ENCODE measurements at regions of chr19 and their contacts with region 1.

Region 1: GRCh38 chr19:44845612-44846454 is at the start of gene NECTIN2:
- DNase-seq: peak; percentile 100
- ATAC-seq: peak; percentile 89 to 92 (median 90)
- H3K4me3 ChIP-seq: peak within 1 kb of the TSS; percentile 78
- H3K27ac ChIP-seq: peak within 1 kb of the TSS; percentile 83
- H3K4me1 ChIP-seq: no peaks in the 10 kb centered on the region
- H3K27me3 ChIP-seq: no peaks in the 10 kb centered on the region
- CTCF ChIP-seq: peak; percentile 55
- total RNA-seq, gene NECTIN2: 17.5 to 32.9 (median 24.1) TPM

Region 2: GRCh38 chr19:44570984-44571684 is 274.7 kb before region 1 on chr19:
- intact Hi-C with region 1: loop called in 1 of 2 experiments (anchors 10 kb)
- DNase-seq: no peak
- ATAC-seq: peak; percentile 63 to 73 (median 70)
- H3K4me3 ChIP-seq: no peak overlapping the region
- H3K27ac ChIP-seq: no peak overlapping the region
- H3K4me1 ChIP-seq: no peaks in the 10 kb centered on the region
- H3K27me3 ChIP-seq: peaks cover 0 to 25% (median 4%) of the 10 kb centered on the region in 3 donors
- CTCF ChIP-seq: peak; percentile 80

Region 3: GRCh38 chr19:44689056-44689895 is 156.6 kb before region 1 on chr19:
- intact Hi-C with region 1: loop called in 1 of 2 experiments (anchors 1 kb)
- DNase-seq: peak; percentile 73 to 86
- ATAC-seq: peak; percentile 59 to 77 (median 67)
- H3K4me3 ChIP-seq: no peak overlapping the region
- H3K27ac ChIP-seq: no peak overlapping the region
- H3K4me1 ChIP-seq: peaks cover 3% of the 10 kb centered on the region
- H3K27me3 ChIP-seq: no peaks in the 10 kb centered on the region
- CTCF ChIP-seq: peak; percentile 88

Region 4: GRCh38 chr19:44723952-44724319 is 121.9 kb before region 1 on chr19:
- intact Hi-C with region 1: loop called in 1 of 2 experiments (anchors 10 kb)
- DNase-seq: peak; percentile 84 to 90
- ATAC-seq: peak; percentile 91 to 98 (median 94)
- H3K4me3 ChIP-seq: no peak overlapping the region
- H3K27ac ChIP-seq: peak overlapping the region; percentile 62
- H3K4me1 ChIP-seq: peaks cover 6% of the 10 kb centered on the region
- H3K27me3 ChIP-seq: no peaks in the 10 kb centered on the region
- CTCF ChIP-seq: peak; percentile 100

Region 5: DNA sequence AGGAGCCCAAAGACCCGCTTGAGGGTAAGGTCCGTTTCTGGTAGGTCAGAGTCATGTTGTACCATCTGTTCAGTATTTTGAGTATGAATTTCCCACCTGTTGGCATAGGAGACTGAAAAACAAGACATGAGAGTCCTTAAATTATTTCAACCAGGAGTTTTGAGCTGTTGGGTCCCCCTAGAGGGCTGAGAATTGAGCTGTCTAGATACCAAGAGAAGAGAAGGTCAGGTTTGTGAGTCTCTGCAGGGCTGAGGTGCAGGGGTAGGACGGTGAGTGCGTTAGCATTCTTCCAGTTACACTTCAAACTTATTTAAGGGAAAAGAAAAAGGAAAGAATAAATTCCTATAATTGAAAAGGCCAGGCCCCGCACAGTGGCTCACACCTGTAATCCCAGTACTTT is 63.1 kb before region 1 on chr19:
- intact Hi-C with region 1: loop called (anchors 1 kb)
- DNase-seq: no peak
- ATAC-seq: no peak
- H3K4me3 ChIP-seq: no peak overlapping the region
- H3K27ac ChIP-seq: no peak overlapping the region
- H3K4me1 ChIP-seq: peaks cover 8% of the 10 kb centered on the region
- H3K27me3 ChIP-seq: no peaks in the 10 kb centered on the region
- CTCF ChIP-seq: no peak

Region 6: GRCh38 chr19:44800461-44800860 is 45.4 kb before region 1 on chr19:
- intact Hi-C with region 1: loop called (anchors 1 to 5 kb)
- DNase-seq: peak; percentile 86 to 92
- ATAC-seq: peak; percentile 89 to 94 (median 92)
- H3K4me3 ChIP-seq: no peak overlapping the region
- H3K27ac ChIP-seq: no peak overlapping the region
- H3K4me1 ChIP-seq: peaks cover 14% of the 10 kb centered on the region
- H3K27me3 ChIP-seq: no peaks in the 10 kb centered on the region
- CTCF ChIP-seq: peak; percentile 92

Region 7: GRCh38 chr19:44808463-44809371 is 37.1 kb before region 1 on chr19 and contains the start of gene BCAM:
- intact Hi-C with region 1: loop called in 1 of 2 experiments (anchors 5 kb)
- DNase-seq: peak; percentile 84 to 86
- ATAC-seq: peak; percentile 77 to 90 (median 82)
- H3K4me3 ChIP-seq: peak within 1 kb of the TSS; percentile 78
- H3K27ac ChIP-seq: peak within 1 kb of the TSS; percentile 68
- H3K4me1 ChIP-seq: peaks cover 18% of the 10 kb centered on the region
- H3K27me3 ChIP-seq: no peaks in the 10 kb centered on the region
- CTCF ChIP-seq: no peak
- total RNA-seq, gene BCAM: 20.0 to 44.9 (median 25.0) TPM